ENCODE measurements at regions of chrX and their contacts with region 1.

Region 1: DNA sequence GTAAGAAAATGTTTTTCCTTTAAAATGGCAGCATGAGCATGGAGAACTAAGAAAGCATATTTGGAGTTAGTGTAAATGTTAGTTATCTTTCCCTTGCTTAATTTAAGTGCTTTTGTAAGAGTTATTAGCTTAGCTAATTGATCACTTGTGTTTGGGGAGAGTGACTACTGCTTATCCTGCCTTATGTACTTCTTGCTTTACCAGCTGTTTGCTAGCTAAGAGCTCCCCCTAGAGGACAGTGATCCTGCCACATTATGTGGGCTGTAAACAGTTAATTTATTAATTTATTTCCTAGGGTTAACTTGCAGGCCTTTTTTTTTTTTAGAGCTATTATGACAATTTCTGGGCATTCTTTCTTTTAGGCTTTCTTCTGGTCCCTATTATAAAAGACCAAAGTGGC is 435.8 kb downstream of the MAGEB5 start:
- DNase-seq: no peak
- H3K4me3 ChIP-seq: no peak overlapping the region
- H3K27ac ChIP-seq: no peak overlapping the region
- H3K4me1 ChIP-seq: no peaks in the 10 kb centered on the region
- H3K27me3 ChIP-seq: no peaks in the 10 kb centered on the region
- CTCF ChIP-seq: peak; percentile 21; the same call in 1 of the 2 replicates

Region 2: GRCh38 chrX:26597981-26598380 is 53.8 kb before region 1 on chrX:
- CTCF ChIA-PET with region 1: no interaction called
- POLR2A ChIA-PET with region 1: no interaction called
- intact Hi-C with region 1: no loop called
- DNase-seq: no peak
- H3K4me3 ChIP-seq: no peak overlapping the region
- H3K27ac ChIP-seq: no peak overlapping the region
- H3K4me1 ChIP-seq: no peaks in the 10 kb centered on the region
- H3K27me3 ChIP-seq: no peaks in the 10 kb centered on the region
- CTCF ChIP-seq: no peak

Region 3: DNA sequence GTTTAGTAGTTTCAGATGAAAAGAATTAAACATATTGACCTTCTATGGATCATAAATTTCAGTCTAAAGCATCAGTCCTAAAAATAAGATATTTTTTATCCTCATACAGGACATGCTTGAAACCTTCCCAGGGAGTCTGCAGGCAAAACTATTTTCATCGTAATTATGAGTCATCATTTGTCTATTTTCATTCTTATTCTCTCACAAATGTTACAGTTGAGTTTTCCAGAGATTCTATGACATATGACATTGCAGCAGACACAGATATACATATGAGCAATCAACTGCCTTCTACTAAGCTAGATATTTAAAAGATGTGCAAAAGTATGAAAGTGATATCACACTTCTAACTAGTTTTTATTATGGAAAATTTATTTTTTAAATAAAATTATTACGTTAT is 37.8 kb before region 1 on chrX:
- CTCF ChIA-PET with region 1: no interaction called
- POLR2A ChIA-PET with region 1: no interaction called
- intact Hi-C with region 1: no loop called
- DNase-seq: no peak
- H3K4me3 ChIP-seq: no peak overlapping the region
- H3K27ac ChIP-seq: no peak overlapping the region
- H3K4me1 ChIP-seq: no peaks in the 10 kb centered on the region
- H3K27me3 ChIP-seq: no peaks in the 10 kb centered on the region
- CTCF ChIP-seq: no peak

Region 4: DNA sequence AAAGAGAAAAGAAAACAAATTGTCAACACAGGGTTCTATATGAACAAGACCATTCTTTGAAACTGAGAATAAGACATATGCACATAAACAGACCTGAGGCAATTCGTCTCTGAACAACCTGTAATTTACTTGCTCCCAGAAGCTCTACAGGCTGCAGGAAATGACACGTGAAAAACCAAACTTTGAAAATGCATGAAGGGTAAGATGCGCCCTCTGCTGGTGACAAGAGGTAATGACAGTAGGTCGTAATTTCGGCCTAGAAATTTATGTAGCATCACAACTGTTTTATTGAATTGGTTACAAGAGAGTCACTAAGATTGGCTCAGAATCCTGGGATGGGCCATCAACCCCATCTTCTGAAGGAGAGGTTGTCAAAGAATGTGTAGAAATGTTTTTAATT is 534.9 kb after region 1 on chrX:
- CTCF ChIA-PET with region 1: no interaction called
- POLR2A ChIA-PET with region 1: no interaction called
- intact Hi-C with region 1: loop called (anchors 2 kb)
- DNase-seq: peak; percentile 14 to 37
- H3K4me3 ChIP-seq: no peak overlapping the region
- H3K27ac ChIP-seq: no peak overlapping the region
- H3K4me1 ChIP-seq: no peaks in the 10 kb centered on the region
- H3K27me3 ChIP-seq: no peaks in the 10 kb centered on the region
- CTCF ChIP-seq: peak; percentile 84

Measured in PC-9 (cell line).